Posterior cingulate gyrus (tissue), 11 donors: ENCODE measurements at regions of chr21 and their contacts with region 1.

Region 1: DNA sequence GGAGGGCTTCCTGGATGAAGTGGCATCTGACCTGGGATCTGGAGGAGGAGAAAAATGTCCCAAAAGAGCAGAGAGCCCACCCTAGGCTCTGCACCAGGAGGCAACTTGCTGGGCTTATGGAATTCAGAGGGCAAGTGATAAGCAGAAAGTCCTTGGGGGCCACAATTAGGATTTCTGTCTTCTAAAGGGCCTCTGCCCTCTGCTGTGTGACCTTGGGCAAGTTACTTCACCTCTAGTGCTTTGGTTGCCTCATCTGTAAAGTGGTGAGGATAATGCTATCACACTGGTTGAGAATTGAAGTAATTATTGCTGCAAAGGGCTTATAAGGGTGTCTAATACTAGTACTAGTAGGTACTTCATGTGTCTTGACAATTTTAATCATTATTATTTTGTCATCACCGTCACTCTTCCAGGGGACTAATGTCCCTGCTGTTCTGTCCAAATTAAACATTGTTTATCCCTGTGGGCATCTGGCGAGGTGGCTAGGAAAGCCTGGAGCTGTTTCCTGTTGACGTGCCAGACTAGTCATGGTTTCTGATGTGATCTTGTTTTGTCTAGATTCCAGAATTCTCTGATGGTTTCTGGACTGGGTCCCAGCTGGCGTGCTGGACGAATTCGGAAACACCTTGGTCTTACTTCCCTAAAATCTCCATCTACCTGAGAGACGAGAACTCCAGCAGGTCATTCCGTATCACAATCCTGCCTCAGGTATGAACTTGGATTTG is 66.2 kb upstream of the FAM3B start:
- DNase-seq: no peak

Region 2: GRCh38 chr21:40631211-40631610 is 619.1 kb before region 1 on chr21:
- intact Hi-C with region 1: no loop called
- DNase-seq: no peak

Region 3: GRCh38 chr21:41121785-41122421 is 128.5 kb before region 1 on chr21:
- intact Hi-C with region 1: loop called (anchors 10 kb)
- DNase-seq: peak; percentile 74 to 96 (median 86)